Tibial artery (tissue), 4 donors: ENCODE measurements at regions of chr14 and their contacts with region 1.

Region 1: DNA sequence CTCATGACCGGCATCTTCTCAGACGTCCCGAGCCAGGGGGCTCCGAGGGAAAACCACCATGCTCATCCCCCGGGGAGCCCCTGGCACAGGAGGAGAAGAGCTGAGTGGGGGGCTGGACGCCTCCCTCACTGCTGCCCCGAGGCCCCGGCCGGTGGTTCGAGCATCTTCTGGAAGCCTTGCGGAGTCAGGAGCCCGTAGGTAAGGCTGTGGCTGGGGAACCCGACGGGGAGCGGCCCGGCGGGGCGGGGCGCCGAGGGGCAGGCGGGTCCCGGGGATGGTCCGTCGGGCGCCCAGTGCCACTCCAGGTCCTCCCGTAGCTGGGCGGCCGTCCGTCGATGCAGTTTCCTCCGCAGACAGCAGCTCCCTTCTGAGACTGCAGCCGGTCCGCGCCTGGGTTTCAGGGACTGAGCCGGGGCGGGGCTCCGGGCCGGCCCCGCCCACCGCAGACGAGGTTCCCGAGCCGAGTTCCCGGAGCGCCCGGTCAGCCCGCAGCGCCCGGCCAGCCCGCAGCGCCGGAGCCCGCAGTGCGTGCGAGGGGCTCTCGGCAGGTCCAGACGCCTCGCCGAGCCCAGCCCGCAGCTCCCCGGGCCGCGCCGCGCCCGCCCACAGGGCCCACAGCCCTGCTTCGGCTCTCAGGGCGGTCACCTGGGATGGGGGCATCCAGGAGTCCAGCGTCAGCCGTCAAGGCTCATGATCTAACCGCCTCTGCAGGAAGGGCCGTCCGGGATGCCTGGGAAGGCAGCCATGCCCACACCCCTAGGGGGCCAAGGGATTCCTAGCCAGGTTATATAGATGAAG is at the start of gene PGF:
- DNase-seq: peak; percentile 67 to 89
- H3K4me3 ChIP-seq: peak within 1 kb of the TSS; percentile 69 to 72
- H3K27ac ChIP-seq: peak within 1 kb of the TSS; percentile 76 to 79
- H3K4me1 ChIP-seq: peaks cover 0 to 55% (median 49%) of the 10 kb centered on the region in 4 donors
- H3K27me3 ChIP-seq: no peaks in the 10 kb centered on the region
- CTCF ChIP-seq: no peak

Region 2: DNA sequence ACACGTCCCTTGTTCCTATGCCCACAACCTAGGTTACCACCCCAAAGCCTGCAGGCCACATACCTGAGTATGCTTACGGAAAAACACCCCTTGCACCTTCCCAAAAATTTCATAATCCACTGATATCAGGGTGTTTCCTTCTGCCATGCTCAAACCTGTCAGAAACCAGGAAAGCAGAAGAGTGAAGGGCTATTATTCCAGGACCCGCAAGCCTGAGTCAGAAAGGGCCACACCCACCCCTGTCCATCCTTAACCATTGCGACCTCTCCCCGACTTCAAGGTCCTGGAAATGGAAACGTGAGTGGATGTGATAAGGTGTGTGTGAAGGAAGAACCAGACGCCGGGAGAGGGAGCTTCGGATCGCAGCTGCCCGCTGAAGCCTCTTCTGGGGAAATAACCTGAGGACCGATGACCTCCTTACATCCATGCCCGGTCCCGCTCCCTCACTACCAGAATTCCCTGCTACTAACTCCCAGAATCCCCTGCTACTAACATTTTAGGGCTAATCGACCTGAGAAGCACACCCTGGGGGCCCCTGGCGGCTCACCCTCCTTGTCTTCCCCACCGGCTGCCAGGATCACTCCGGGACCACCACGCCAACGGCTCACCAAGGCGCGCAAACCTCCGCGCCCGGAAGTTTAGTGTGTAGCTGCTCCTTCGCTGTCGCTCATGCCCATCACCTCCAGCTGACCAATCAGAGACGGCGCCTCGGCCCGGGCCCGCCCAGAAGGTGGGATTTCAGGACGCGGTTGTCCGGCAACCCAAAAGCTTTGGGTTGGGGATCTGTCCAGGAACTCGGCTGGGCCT is 108.2 kb after region 1 on chr14 and contains the start of gene ACYP1:
- intact Hi-C with region 1: loop called (anchors 10 kb)
- DNase-seq: peak; percentile 93 to 96
- H3K4me3 ChIP-seq: peak within 1 kb of the TSS; percentile 70 to 88
- H3K27ac ChIP-seq: peak within 1 kb of the TSS; percentile 75 to 82
- H3K4me1 ChIP-seq: peaks cover 0 to 35% (median 15%) of the 10 kb centered on the region in 4 donors
- H3K27me3 ChIP-seq: no peaks in the 10 kb centered on the region
- CTCF ChIP-seq: no peak

Region 3: GRCh38 chr14:75119056-75119455 is 163.6 kb after region 1 on chr14:
- intact Hi-C with region 1: no loop called
- DNase-seq: no peak
- H3K4me3 ChIP-seq: no peak overlapping the region
- H3K27ac ChIP-seq: no peak overlapping the region
- H3K4me1 ChIP-seq: peaks cover 0 to 4% (median 0%) of the 10 kb centered on the region in 4 donors
- H3K27me3 ChIP-seq: no peaks in the 10 kb centered on the region
- CTCF ChIP-seq: no peak

Region 4: DNA sequence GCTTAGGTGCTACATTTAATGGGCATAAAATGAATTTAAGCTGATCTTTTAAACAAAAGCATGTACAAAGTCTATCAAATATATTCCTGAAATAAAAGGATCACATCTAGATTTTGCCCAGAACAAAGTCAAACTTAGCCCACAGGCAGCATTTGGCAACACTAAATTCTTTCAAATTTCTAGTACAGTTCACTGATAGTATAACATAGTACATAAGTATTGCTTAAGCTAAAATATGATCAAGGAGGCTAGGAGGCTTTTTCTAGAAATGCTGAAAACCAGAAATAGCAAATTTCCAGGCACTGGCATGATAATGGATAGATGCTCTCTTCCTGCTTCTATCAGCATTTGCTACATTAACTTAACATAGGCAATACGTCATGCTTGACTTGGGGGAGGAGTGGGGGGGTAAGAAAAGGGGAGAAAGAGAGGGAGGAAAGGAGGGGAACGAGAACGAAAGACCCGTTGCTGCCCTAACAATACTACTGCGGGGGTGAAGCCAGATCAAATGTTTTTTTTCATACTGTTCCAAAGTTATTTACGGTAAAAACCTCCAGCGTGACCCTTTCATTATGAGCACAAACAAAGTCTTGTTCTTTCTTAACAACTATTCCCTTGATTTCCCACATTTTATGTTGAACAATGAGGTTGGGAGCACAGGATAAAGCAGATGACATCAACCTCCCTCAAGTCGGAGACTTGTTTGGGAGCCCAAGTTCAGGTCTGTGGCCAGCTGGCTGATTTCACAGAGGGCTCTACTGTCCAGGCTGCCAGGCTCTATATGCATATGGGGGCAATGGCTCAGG is 210.4 kb after region 1 on chr14:
- intact Hi-C with region 1: no loop called
- DNase-seq: no peak
- H3K4me3 ChIP-seq: no peak overlapping the region
- H3K27ac ChIP-seq: peak overlapping the region; percentile 20 to 31
- H3K4me1 ChIP-seq: peaks cover 0 to 47% (median 20%) of the 10 kb centered on the region in 4 donors
- H3K27me3 ChIP-seq: no peaks in the 10 kb centered on the region
- CTCF ChIP-seq: no peak

Region 5: GRCh38 chr14:75223664-75224154 is 268.3 kb after region 1 on chr14:
- intact Hi-C with region 1: no loop called
- DNase-seq: peak in 1 of 2 donors; percentile 59
- H3K4me3 ChIP-seq: no peak overlapping the region
- H3K27ac ChIP-seq: no peak overlapping the region
- H3K4me1 ChIP-seq: no peaks in the 10 kb centered on the region
- H3K27me3 ChIP-seq: no peaks in the 10 kb centered on the region
- CTCF ChIP-seq: no peak